ENCODE measurements at regions of chr17 and their contacts with region 1.

Region 1: GRCh38 chr17:28661635-28662537 is at the starts of genes SDF2 and SUPT6H:
- DNase-seq: peak; percentile 91 to 97 (median 95)
- ATAC-seq: peak; percentile 91
- H3K4me3 ChIP-seq: peak within 1 kb of the TSS; percentile 72
- H3K4me3 Mint-ChIP-seq: peak within 1 kb of the TSS; percentile 86 to 100 (median 99)
- H3K27ac ChIP-seq: peak within 1 kb of the TSS; percentile 90
- H3K27ac Mint-ChIP-seq: peak within 1 kb of the TSS; percentile 98 to 100 (median 100)
- H3K4me1 ChIP-seq: peaks cover 24 to 35% of the 10 kb centered on the region in 2 donors
- H3K4me1 Mint-ChIP-seq: peaks cover 45 to 73% (median 67%) of the 10 kb centered on the region in 7 donors
- H3K27me3 ChIP-seq: no peaks in the 10 kb centered on the region
- H3K27me3 Mint-ChIP-seq: no peaks in the 10 kb centered on the region
- total RNA-seq, gene SDF2: 28.6 to 49.5 (median 43.8) TPM
- total RNA-seq, gene SUPT6H: 91.2 to 132 (median 98.5) TPM

Region 2: GRCh38 chr17:28598799-28599310 is 63.0 kb before region 1 on chr17 and contains the start of gene SPAG5:
- CTCF ChIA-PET with region 1: no interaction called
- POLR2A ChIA-PET with region 1: interaction called, 5 read pairs
- intact Hi-C with region 1: loop called (anchors 2 to 5 kb)
- DNase-seq: peak; percentile 93 to 97 (median 96)
- ATAC-seq: peak; percentile 98
- H3K4me3 ChIP-seq: peak within 1 kb of the TSS; percentile 93
- H3K4me3 Mint-ChIP-seq: peak within 1 kb of the TSS; percentile 88 to 99 (median 94)
- H3K27ac ChIP-seq: peak within 1 kb of the TSS; percentile 97
- H3K27ac Mint-ChIP-seq: peak within 1 kb of the TSS; percentile 96 to 99 (median 98)
- H3K4me1 ChIP-seq: peaks cover 8 to 10% of the 10 kb centered on the region in 2 donors
- H3K4me1 Mint-ChIP-seq: peaks cover 18 to 25% (median 21%) of the 10 kb centered on the region in 7 donors
- H3K27me3 ChIP-seq: no peaks in the 10 kb centered on the region
- H3K27me3 Mint-ChIP-seq: no peaks in the 10 kb centered on the region
- total RNA-seq, gene SPAG5: 10.4 to 95.3 (median 18.4) TPM

Region 3: DNA sequence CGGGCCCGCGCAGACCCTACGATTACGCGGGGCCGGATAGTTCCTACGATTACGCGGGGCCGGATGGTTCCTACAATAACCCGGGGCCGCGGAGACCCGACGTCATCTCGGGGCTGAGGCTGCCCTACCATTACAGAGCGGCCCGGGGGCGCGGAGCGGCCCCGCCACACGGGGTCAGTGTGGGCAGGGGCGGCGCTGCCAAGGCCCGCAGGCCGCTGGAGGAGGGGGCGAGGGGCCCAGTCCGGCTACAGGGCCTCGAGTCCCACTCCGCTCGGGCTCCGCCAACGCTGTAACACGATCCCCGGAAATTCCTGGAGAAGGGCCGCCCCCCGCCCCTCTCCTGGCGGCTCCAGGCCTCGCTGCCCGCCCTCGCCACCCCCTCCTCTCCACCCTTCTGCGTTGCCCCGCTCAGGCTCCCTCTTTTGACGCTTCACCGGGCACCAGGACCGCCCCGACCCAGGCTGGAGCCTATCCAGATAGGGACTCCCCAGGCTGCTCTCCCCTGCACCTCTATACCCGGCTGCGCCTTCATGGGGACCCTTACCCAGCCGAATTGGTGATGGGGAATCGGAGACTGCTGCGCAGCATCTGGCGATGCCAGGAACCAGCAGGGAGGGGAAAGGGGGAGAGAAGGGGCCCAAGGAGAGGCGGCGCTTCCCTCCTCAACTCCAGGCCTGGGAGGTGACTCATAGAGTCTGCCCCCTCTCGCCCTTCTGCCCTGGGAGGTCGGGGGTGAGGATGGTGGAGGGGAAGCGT is 55.9 kb after region 1 on chr17 and contains the start of gene RAB34:
- CTCF ChIA-PET with region 1: no interaction called
- POLR2A ChIA-PET with region 1: interaction called, 21 read pairs
- intact Hi-C with region 1: loop called (anchors 1 to 5 kb)
- DNase-seq: peak in 2 of 9 donors; percentile 18 to 21
- ATAC-seq: no peak
- H3K4me3 ChIP-seq: no peak within 1 kb of the TSS
- H3K4me3 Mint-ChIP-seq: peak within 1 kb of the TSS; percentile 58 to 99 (median 76)
- H3K27ac ChIP-seq: peak within 1 kb of the TSS; percentile 52
- H3K27ac Mint-ChIP-seq: peak within 1 kb of the TSS; percentile 59 to 97 (median 85)
- H3K4me1 ChIP-seq: peaks cover 26 to 30% of the 10 kb centered on the region in 2 donors
- H3K4me1 Mint-ChIP-seq: peaks cover 17 to 57% (median 35%) of the 10 kb centered on the region in 7 donors
- H3K27me3 ChIP-seq: no peaks in the 10 kb centered on the region
- H3K27me3 Mint-ChIP-seq: peaks cover 0 to 24% (median 6%) of the 10 kb centered on the region in 5 donors
- total RNA-seq, gene RAB34: 11.0 to 50.2 (median 16.4) TPM

Region 4: DNA sequence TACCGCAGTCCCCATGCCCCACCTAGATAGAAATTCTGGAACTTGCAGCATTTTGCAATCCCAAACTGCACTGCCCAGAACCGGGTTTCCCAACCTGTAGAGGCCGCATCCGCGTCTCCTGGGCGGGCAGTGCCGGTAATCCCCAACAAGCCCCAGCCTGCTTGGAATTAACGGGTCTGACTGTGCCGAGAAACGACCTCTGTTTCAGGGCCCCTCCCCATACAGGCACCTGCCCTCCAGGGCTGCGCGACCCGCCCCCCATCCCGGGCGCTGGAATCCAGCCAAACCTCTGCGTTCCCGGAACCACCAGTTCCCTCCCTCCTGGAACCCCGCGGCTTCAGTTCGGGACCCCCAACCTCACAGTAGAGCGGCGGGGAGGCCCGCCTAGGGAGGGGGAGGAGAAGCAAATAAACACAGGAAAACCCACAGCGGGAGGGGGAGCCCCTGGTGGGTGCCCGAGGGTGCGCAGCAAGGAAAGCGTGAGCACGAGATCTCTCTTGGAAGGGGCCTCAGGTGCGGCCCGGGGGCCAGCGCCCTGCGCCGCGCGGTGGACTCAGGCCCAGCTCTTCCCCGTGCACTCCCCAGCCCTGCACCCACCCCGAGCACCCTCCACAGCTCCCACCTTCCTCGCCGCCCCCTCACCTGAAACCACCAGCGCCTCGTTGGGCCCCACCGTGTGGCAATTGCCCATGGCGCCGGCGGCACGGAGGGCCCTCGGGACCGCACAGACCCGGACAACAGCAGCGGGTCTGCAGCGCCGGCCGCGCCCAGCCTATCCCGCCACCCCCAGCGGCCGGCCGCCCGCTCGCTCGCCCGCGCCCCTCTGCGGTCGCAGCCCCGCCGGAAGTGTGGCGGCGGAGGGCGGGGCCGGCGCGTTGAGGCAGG is 235.2 kb after region 1 on chr17 and contains the start of gene FLOT2:
- CTCF ChIA-PET with region 1: no interaction called
- POLR2A ChIA-PET with region 1: no interaction called
- intact Hi-C with region 1: loop called in 1 of 2 experiments (anchors 5 kb)
- DNase-seq: peak; percentile 41 to 77 (median 76)
- ATAC-seq: peak; percentile 84
- H3K4me3 ChIP-seq: peak within 1 kb of the TSS; percentile 82
- H3K4me3 Mint-ChIP-seq: peak within 1 kb of the TSS; percentile 86 to 98 (median 96)
- H3K27ac ChIP-seq: peak within 1 kb of the TSS; percentile 96
- H3K27ac Mint-ChIP-seq: peak within 1 kb of the TSS; percentile 95 to 99 (median 97)
- H3K4me1 ChIP-seq: peaks cover 43 to 45% of the 10 kb centered on the region in 2 donors
- H3K4me1 Mint-ChIP-seq: peaks cover 32 to 80% (median 64%) of the 10 kb centered on the region in 7 donors
- H3K27me3 ChIP-seq: no peaks in the 10 kb centered on the region
- H3K27me3 Mint-ChIP-seq: no peaks in the 10 kb centered on the region
- total RNA-seq, gene FLOT2: 134 to 252 (median 191) TPM